Sciatic nerve (tissue), 2 donors: ENCODE measurements at regions of chr10 and their contacts with region 1.

Region 1: GRCh38 chr10:101062206-101063049 is 639 bp downstream of the KAZALD1 start:
- DNase-seq: peak; percentile 64
- ATAC-seq: no peak

Region 2: DNA sequence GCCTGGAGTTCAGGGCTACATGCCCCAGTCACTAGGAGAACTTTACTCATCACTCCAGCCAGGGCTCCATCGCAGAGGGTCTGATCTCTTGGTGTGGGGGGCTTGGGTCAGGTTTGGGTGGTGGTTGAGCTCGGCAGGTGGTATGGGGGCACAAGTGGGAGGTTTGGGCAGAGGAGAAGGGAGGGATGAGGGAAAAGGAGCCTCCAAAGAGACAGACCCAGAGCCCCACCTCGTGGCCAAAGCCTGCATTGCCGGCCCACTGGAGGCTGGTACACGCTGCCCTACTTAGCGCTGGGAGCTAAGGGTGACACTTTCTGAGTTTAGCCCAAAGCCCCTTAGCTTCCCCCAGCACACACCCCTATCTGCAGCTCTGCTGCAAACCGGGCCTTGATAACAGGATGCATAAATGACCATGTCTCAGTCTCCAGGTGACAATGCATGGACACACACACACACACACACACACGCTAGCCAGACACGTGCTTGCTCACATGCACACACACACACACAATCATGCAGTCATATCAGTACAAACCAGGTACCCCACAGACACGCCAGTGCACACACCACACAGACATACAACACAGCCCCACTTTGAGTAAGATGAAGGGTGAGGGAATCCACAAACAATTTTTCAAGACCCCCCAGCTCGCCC is 48.1 kb before region 1 on chr10:
- intact Hi-C with region 1: loop called (anchors 1 kb)
- DNase-seq: peak; percentile 92
- ATAC-seq: peak; percentile 76